PC-3 (cell line): ENCODE measurements at regions of chr3 and their contacts with region 1.

Region 1: GRCh38 chr3:14577897-14578296 is 37.8 kb upstream of the GRIP2 start:
- DNase-seq: peak; percentile 19
- ATAC-seq: peak; percentile 64
- H3K4me3 ChIP-seq: no peak overlapping the region
- H3K27ac ChIP-seq: no peak overlapping the region
- H3K4me1 ChIP-seq: peaks cover 1% of the 10 kb centered on the region; the same call in 1 of the 2 replicates
- H3K27me3 ChIP-seq: no peaks in the 10 kb centered on the region
- CTCF ChIP-seq: peak; percentile 30; the same call in 1 of the 2 replicates

Region 2: DNA sequence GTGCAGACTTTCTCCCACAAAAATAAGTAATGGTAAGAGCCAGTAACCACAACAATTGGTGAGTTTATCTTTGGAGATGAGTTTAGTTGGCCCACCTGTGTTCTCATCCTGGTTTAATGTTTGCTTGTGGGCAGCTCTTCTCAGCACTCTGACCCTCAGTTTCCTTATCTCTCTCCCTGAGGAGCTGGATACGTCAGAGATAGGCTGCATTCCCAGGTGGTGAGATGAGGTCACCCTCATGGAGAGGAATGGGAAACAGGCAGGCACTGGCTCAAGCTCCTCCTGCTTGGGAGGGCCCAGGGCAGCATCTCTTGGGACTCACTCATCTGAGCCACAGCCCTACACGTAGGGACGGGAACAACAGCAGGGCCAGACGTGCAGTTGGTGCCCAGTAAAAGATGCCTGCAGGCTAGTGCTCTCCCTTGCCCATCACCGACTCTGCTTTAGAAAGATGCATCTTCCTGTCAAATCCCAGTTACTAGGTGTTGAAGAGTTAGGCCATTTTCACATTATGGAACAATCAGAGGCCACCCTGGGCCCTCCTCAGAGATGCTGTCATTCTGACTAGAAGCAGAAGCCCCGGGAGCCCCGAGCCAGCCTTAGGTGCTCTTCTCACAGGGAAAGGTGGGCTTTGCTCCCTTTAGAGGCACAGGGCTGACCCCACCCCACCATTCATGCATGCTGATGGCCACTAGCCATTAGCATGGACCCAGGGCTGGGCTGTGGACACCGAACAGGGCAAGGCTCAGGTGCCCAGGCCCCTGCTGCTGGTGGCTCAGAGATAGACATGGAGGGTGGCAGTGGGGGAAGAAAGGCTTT is 97.5 kb before region 1 on chr3:
- CTCF ChIA-PET with region 1: no interaction called
- POLR2A ChIA-PET with region 1: no interaction called
- intact Hi-C with region 1: no loop called
- DNase-seq: no peak
- ATAC-seq: no peak
- H3K4me3 ChIP-seq: no peak overlapping the region
- H3K27ac ChIP-seq: no peak overlapping the region
- H3K4me1 ChIP-seq: no peaks in the 10 kb centered on the region
- H3K27me3 ChIP-seq: no peaks in the 10 kb centered on the region
- CTCF ChIP-seq: no peak

Region 3: DNA sequence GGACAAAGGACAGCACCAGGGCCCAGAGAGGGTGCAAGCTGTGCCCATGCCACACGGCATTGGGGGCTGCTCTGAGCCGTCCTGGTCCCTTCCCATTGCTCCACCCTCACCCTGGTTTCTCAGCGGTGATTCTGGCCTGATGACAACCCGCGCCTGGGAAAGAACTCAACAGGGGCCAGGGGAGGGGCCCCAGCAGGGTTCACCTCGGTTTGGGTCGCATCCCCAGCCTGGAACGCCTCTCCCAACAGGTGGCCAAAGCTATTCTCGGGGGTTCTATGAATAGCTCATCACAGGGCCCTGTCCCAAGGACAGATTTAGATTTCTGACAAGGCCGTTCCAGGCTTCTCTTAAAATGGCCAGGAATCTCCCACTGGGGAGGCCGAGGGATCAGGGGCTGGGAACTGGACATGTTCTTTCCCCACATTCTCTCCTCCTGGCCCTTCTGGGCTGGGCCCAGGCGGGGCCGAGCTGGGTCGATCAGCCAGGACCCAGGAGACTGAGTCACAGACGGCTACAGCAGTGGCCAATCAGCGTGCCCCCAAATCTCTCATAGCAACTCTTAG is 55.7 kb before region 1 on chr3:
- CTCF ChIA-PET with region 1: no interaction called
- POLR2A ChIA-PET with region 1: interaction called, 13 read pairs
- intact Hi-C with region 1: no loop called
- DNase-seq: no peak
- ATAC-seq: no peak
- H3K4me3 ChIP-seq: no peak overlapping the region
- H3K27ac ChIP-seq: no peak overlapping the region
- H3K4me1 ChIP-seq: no peaks in the 10 kb centered on the region; the same call in 1 of the 2 replicates
- H3K27me3 ChIP-seq: no peaks in the 10 kb centered on the region; the same call in 1 of the 2 replicates
- CTCF ChIP-seq: no peak